Calu3 (cell line): ENCODE measurements at regions of chr15 and their contacts with region 1.

Region 1: DNA sequence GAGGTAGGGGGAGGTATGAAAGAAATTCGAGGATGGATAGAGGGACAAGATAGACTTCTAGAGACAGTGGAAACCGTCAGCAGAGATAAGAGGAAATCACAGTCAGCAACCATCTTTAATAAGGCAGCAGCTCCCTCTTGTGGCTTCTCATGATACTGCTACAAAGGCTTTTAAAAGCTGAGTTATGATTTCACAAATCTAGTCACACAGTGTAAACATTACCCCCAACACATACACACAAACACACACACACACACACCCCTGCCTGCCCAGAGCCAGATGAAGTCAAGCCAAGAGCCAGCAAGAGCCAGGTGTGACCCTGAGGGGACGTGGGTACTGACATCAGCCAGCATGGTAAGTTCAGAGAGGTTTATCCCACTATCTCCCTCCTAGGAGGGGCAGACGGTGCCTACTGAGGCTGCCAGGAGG is 18.9 kb upstream of the TGM5 start:
- DNase-seq: peak; percentile 42
- H3K4me3 Mint-ChIP-seq: no peak overlapping the region
- H3K27ac Mint-ChIP-seq: no peak overlapping the region
- H3K4me1 Mint-ChIP-seq: no peaks in the 10 kb centered on the region
- H3K27me3 Mint-ChIP-seq: peaks cover 45% of the 10 kb centered on the region
- CTCF ChIP-seq: peak; percentile 21

Region 2: DNA sequence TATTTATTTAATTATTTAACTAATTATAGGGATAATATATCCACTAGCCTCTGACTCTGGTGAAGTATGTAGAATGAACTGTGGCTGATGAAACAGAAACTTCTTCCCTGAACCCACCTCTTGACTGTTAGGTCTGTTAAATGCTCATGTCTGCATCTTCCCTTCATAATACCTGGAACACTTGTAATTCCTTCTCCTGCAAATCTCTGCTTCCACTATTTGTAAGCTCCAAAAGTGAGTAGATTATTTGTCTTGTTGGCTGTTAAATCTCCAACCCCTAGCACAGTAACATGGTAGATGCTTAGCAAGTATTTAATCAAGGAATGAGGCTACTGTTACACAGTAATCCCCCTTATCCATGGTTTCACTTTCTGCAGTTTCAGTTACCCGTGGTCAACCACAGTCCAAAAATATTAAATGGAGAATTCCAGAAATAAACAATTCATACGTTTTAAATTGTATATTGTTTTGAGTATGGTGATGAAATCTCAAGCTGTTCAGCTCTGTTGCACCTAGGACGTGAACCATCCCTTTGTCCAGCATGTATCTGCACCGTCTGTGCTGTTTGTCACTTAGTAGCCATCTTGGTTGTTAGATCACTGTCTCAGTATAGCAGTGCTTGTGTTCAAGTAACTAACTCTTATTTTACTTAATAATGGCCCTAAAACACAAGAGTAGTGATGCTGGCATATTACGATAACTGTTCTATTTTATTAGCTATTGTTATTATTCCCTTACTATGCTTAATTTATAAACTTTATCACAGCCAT is 370.7 kb before region 1 on chr15:
- CTCF ChIA-PET with region 1: no interaction called
- intact Hi-C with region 1: no loop called
- DNase-seq: no peak
- H3K4me3 Mint-ChIP-seq: no peak overlapping the region
- H3K27ac Mint-ChIP-seq: no peak overlapping the region
- H3K4me1 Mint-ChIP-seq: no peaks in the 10 kb centered on the region
- H3K27me3 Mint-ChIP-seq: no peaks in the 10 kb centered on the region
- CTCF ChIP-seq: no peak

Region 3: DNA sequence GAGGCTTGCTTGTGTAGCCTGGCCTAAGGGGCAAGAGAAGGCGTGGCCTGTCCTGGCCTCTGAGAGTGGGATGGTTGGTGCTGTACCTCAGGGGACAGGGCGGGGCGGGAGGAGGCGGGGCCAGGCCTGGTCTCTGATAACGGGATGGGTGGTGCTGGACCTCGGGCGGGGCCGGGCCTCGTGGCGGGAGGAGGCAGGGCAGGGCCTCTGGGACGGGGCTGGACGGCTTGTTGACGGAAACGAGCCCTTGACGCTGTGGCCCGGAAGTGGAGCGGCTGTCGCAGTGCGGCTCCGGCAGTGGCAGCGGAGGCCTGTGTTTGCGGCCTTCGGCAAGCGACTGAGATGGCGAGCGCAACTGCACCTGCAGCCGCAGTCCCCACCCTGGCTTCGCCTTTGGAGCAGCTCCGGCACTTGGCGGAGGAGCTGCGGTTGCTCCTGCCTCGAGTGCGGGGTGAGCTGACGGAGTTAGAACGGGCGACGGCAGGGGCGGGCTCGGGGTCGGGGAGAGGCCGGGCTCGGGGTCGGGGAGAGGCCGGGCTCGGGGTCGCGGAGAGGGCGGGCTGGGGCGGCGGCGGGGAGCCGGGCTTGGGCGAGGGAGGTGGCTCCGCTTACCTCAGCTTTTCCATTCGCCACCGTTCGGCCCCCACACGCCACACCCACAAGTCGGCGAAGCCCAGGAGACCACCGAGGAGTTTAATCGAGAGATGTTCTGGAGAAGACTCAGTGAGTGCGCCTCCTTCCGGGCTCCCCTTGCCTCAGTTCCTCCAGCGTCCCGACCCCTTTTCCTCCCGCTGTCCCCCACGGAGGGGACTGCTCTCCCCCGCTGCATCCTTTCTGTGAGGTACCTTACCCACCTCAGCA is 100.2 kb before region 1 on chr15 and contains the start of gene CCNDBP1:
- CTCF ChIA-PET with region 1: interaction called, 6 read pairs
- intact Hi-C with region 1: loop called (anchors 5 kb)
- DNase-seq: peak; percentile 92
- H3K4me3 Mint-ChIP-seq: peak within 1 kb of the TSS; percentile 77
- H3K27ac Mint-ChIP-seq: peak within 1 kb of the TSS; percentile 58
- H3K4me1 Mint-ChIP-seq: peaks cover 12% of the 10 kb centered on the region
- H3K27me3 Mint-ChIP-seq: no peaks in the 10 kb centered on the region
- CTCF ChIP-seq: no peak
- total RNA-seq, gene CCNDBP1: 13.7 and 15.8 TPM in 2 replicates

Region 4: DNA sequence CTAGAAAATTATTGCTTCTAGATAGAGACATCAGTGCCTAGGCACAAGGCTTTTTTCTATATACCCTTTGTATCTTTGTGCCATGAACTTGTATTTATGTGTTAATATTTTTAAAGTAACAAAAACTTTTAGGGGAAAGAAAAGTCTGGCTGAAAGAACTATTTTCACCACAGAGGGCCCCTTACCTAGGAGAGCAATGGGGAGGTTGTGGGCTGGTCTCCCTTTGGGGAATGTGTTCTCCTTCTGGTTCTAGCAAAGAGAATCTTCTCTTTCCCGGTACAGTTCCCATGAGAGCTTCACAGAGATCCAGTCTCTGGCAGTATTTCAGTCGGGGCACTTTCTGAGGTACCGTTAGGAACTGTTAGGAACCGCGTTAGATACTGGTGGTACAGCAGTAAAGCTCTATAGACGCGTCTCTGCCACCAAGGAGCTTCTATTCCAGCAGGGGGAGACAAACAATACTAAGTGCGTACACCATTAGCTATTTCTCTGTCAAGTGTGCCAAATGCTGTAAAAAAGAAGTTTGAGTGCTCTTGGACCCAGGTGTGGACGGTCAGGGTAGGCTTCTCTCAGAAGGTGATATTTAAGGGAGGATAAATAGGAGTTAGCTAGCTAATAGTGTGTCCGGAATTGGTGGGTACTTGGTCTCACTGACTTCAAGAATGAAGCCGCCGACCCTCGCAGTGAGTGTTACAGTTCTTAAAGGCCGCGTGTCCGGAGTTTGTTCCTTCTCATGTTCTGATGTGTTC is 60.2 kb before region 1 on chr15:
- CTCF ChIA-PET with region 1: interaction called, 55 read pairs
- intact Hi-C with region 1: loop called (anchors 1 kb)
- DNase-seq: peak; percentile 40
- H3K4me3 Mint-ChIP-seq: no peak overlapping the region
- H3K27ac Mint-ChIP-seq: no peak overlapping the region
- H3K4me1 Mint-ChIP-seq: no peaks in the 10 kb centered on the region
- H3K27me3 Mint-ChIP-seq: peaks cover 20% of the 10 kb centered on the region
- CTCF ChIP-seq: peak; percentile 27